Endothelial cell of umbilical vein (primary cell): ENCODE measurements at regions of chr4 and their contacts with region 1.

Region 1: DNA sequence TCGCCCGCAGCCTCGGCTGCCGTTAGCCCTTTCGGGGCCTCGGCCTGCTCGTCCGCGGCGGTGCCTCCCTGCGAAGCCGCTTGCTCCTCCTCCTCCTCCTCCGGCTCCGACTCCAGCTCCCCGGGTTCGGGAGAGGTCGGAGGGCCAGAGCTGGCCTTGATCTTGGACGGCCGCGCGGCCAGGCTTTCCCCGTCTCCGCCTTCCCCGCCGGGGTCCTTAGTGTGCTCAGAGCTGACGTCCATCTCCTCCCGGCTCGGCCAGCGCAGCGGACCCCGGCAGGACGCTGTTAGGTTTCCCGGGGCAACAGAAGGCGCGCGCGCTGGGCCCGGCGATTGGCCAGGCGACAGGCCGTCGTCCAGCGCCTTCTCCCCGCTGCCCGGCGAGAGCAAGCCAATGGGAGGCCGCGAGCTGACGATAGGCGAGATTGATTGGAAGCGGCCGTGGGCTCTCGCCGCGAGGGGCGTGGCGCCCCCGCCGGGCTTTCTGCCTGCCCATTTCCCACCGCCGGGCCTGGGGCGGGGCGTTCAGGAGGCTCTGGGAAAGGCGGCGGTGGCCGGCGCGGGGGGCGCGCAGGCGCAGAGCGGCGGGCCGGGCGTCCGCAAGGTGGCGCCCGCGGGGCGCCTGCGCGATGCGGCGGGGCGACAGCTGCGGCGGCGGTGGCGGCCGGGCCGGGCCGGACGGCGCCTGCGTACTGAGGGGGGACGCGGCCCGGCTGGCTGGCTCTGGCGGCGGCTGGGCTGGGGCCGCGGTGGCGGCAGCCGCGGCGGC is at the start of gene TADA2B:
- DNase-seq: peak; percentile 98
- H3K4me3 ChIP-seq: peak within 1 kb of the TSS; percentile 69 to 91 (median 75)
- H3K27ac ChIP-seq: peak within 1 kb of the TSS; percentile 68
- H3K4me1 ChIP-seq: peaks cover 17% of the 10 kb centered on the region
- H3K27me3 ChIP-seq: no peaks in the 10 kb centered on the region
- CTCF ChIP-seq: peak; percentile 8 to 32
- POLR2A ChIP-seq: no peak
- total RNA-seq, gene TADA2B: 11.5 and 12.3 TPM in 2 replicates

Region 2: GRCh38 chr4:6909073-6909965 is 133.6 kb before region 1 on chr4 and contains the start of gene TBC1D14:
- CTCF ChIA-PET with region 1: interaction called, 7 read pairs
- POLR2A ChIA-PET with region 1: no interaction called
- dilution Hi-C with region 1: no loop called
- intact Hi-C with region 1: loop called (anchors 1 kb)
- DNase-seq: peak; percentile 85
- H3K4me3 ChIP-seq: peak within 1 kb of the TSS; percentile 65 to 80 (median 73)
- H3K27ac ChIP-seq: peak within 1 kb of the TSS; percentile 91
- H3K4me1 ChIP-seq: peaks cover 16% of the 10 kb centered on the region
- H3K27me3 ChIP-seq: peaks cover 0 to 9% of the 10 kb centered on the region in 2 experiments
- CTCF ChIP-seq: peak in 1 of 2 donors; percentile 23
- POLR2A ChIP-seq: peak; percentile 56
- total RNA-seq, gene TBC1D14: 23.3 and 24.8 TPM in 2 replicates

Region 3: GRCh38 chr4:6935965-6936364 is 106.9 kb before region 1 on chr4:
- CTCF ChIA-PET with region 1: no interaction called
- POLR2A ChIA-PET with region 1: no interaction called
- dilution Hi-C with region 1: no loop called
- intact Hi-C with region 1: no loop called
- DNase-seq: no peak
- H3K4me3 ChIP-seq: no peak overlapping the region
- H3K27ac ChIP-seq: no peak overlapping the region
- H3K4me1 ChIP-seq: peaks cover 8% of the 10 kb centered on the region
- H3K27me3 ChIP-seq: no peaks in the 10 kb centered on the region
- CTCF ChIP-seq: no peak
- POLR2A ChIP-seq: no peak

Region 4: DNA sequence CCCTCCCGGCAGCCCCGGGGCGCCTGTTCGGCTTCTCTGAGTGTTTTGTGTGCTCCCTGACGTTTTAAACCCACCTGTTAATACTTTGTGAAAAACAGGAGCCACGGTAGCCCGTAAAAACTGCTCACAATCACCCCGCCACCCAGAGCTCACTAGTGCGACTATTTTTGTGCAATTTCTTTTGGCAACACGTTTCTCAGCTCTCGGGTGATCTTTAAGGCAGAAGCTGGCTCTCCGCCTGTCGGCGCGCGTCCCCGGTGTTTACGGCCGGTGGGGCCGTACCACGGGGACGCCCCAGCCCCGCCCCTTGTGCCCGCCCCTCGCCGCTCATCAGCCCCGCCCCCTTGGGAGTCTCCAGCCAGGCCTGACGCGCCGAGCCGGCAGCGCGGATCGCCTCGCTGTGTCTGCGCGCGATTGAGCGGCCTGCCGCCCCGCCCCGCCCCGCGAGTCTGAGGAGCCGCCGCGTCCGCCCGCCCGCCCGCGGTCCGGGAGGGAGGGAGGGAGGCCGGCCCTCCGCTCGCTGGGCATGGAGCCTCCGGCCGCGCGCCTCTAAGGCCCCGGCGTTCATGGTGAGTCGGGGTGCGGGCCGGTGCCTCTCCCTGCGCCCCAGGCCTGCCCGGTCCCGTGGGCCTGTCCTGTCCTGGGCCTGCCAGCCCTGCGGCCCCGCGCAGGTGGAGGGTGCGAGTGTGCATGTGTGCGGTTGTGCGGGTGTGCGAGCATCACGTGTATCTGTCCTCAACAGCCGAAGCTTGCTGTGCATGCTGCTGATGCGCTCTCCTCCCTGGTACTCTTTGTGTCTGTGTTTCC is 55.9 kb before region 1 on chr4:
- CTCF ChIA-PET with region 1: no interaction called
- POLR2A ChIA-PET with region 1: interaction called, 3 read pairs
- dilution Hi-C with region 1: no loop called
- intact Hi-C with region 1: loop called (anchors 1 kb)
- DNase-seq: peak; percentile 92
- H3K4me3 ChIP-seq: peak overlapping the region; percentile 62 to 80 (median 73)
- H3K27ac ChIP-seq: peak overlapping the region; percentile 77
- H3K4me1 ChIP-seq: peaks cover 60% of the 10 kb centered on the region
- H3K27me3 ChIP-seq: no peaks in the 10 kb centered on the region
- CTCF ChIP-seq: no peak
- POLR2A ChIP-seq: peak; percentile 87

Region 5: DNA sequence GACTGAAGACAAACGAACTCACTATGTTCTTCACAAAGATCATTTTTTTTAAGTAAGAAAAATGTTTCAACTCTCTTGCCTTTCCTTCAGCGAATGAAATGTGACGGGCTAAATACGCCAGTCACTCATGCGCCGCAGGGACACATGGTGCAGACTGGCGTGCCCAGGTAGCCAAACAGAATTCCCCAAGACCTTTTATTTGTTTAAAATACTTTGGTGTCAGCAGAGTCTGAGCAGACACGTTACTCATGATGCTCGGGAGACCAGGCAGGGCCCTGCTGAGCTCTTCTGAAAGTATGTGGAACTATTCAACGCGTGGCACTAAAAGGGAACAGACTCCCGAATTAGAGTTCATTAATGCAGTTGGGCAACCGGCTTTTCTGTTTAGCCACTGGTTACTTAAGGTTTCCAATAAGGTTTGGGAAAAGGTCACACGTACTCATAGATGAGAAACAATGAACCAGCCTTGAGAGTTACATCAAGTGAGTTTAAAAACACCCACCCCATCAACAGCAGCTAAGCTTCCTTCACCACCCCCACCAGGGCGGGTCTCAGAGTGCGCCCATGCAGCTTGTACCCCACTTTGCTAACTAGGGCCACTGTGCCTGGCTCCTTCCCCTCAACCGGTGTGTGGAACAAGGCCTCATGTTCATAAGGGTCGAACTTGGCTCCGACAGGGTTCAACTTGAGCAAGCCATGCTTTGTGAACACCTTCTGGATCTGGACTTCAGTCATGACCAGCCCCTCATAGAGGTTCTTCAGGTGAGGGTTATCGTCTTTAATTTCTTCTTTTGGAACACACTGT is 17.7 kb after region 1 on chr4:
- CTCF ChIA-PET with region 1: interaction called, 24 read pairs
- POLR2A ChIA-PET with region 1: interaction called, 3 read pairs
- dilution Hi-C with region 1: no loop called
- intact Hi-C with region 1: loop called (anchors 1 kb)
- DNase-seq: no peak
- H3K4me3 ChIP-seq: no peak overlapping the region
- H3K27ac ChIP-seq: no peak overlapping the region
- H3K4me1 ChIP-seq: peaks cover under 1% of the 10 kb centered on the region
- H3K27me3 ChIP-seq: no peaks in the 10 kb centered on the region
- CTCF ChIP-seq: no peak
- POLR2A ChIP-seq: no peak